H1 (cell line): ENCODE measurements at regions of chr16 and their contacts with region 1.

Region 1: GRCh38 chr16:87778830-87779579 is 13.2 kb upstream of the KLHDC4 start:
- DNase-seq: peak; percentile 95 to 99
- H3K4me3 ChIP-seq: no peak overlapping the region
- H3K27ac ChIP-seq: peak overlapping the region; percentile 89
- H3K4me1 ChIP-seq: peaks cover 0 to 8% (median 6%) of the 10 kb centered on the region in 4 experiments; a peak in 5 of 7 replicates
- H3K27me3 ChIP-seq: no peaks in the 10 kb centered on the region
- CTCF ChIP-seq: peak; percentile 93 to 98 (median 97)
- EP300 ChIP-seq: peak in 1 of 2 experiments; percentile 92; a peak in 1 of 3 replicates
- POLR2A ChIP-seq: peak; percentile 47 to 75
- RAD21 ChIP-seq: peak; percentile 99 to 100

Region 2: DNA sequence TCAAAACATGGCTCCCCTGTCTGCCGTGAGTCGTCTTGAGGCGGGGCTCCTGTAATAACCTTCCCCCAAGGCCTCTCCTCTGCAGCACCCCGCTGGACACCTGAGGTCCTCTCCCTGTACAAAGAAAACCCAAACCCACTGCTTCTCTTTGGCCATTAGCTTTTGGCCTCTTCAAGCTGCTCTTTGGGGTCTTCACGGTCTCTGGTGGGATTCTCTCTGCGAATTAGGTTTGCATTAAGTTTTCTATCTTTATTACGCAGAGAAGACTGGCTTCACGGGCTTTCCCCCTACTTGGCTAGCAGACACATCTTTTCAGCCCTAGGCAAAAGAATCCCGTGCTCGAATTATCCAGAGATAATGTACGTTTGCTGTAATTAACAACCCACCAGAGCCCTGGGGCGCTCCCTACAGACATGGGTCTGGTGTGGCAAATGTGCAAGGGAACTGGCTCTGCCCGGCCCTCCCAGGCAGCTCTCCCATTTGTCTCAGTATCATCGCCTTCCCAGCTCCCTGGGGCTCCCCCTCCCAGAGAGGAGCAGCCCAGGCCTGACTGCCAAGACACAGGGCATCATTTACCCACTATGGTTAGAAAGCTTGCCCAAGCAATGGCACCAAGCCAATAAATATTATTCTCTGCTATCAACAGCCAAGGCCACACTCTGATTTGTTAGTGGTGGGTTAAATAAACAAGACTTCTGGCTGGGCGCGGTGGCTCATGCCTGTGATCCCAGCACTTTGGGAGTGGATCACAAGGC is 11.4 kb after region 1 on chr16:
- CTCF ChIA-PET with region 1: interaction called, 44 read pairs
- POLR2A ChIA-PET with region 1: interaction called, 18 read pairs
- DNase-seq: no peak
- H3K4me3 ChIP-seq: no peak overlapping the region
- H3K27ac ChIP-seq: no peak overlapping the region
- H3K4me1 ChIP-seq: no peaks in the 10 kb centered on the region
- H3K27me3 ChIP-seq: no peaks in the 10 kb centered on the region
- CTCF ChIP-seq: no peak
- EP300 ChIP-seq: no peak
- POLR2A ChIP-seq: no peak
- RAD21 ChIP-seq: no peak

Region 3: DNA sequence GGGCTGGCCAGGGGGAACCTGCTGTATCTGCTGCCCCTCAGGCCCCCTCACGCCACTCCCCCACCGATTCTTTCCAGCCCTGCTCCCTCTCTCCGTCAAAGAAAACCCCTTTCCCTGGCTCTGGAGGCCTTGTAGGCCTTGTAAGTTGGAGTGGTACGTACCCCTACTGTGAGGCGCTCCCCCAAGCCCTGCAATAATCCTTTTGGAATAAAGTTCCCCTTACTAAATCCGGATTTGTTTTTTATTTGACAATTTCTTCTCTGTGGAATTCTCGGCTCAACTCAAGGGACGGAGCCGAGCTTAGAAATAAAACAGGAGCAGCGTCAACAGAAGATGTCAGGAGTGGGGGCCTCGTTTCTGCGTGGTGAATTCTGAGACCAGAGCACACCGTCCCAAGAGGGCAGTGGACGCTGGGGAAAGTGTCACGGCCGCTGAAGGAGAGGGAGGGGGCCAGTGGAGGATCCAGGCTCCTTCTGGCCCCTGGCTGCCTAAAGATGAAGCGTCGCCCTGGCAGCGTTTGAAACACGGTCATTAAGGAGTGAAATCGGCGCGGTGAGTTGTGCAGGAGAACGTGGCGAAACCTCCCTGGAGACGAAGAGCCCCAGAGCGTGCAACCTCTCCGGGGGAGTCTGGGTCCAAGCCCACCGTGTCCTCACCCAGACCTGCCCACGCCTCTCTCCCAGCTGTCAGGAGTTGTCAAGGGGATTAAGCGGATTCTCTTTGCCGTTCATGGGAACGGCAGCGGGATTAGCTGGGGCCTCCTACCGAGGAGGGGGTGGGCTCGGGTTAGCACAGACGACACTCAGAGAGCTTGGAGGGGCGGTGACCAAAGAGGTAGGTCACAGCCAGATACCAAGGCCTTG is 43.3 kb after region 1 on chr16:
- CTCF ChIA-PET with region 1: interaction called, 74 read pairs
- POLR2A ChIA-PET with region 1: interaction called, 117 read pairs
- DNase-seq: no peak
- H3K4me3 ChIP-seq: no peak overlapping the region; a peak in 1 of 8 replicates
- H3K27ac ChIP-seq: no peak overlapping the region
- H3K4me1 ChIP-seq: peaks cover 15 to 53% (median 41%) of the 10 kb centered on the region in 4 experiments
- H3K27me3 ChIP-seq: no peaks in the 10 kb centered on the region
- CTCF ChIP-seq: no peak
- EP300 ChIP-seq: no peak
- POLR2A ChIP-seq: no peak
- RAD21 ChIP-seq: no peak

Region 4: GRCh38 chr16:87844120-87844733 is 65.2 kb after region 1 on chr16:
- CTCF ChIA-PET with region 1: interaction called, 120 read pairs
- POLR2A ChIA-PET with region 1: interaction called, 18 read pairs
- DNase-seq: peak in 1 of 2 experiments; percentile 75
- H3K4me3 ChIP-seq: no peak overlapping the region
- H3K27ac ChIP-seq: no peak overlapping the region
- H3K4me1 ChIP-seq: peaks cover 0 to 6% (median 0%) of the 10 kb centered on the region in 4 experiments; a peak in 1 of 7 replicates
- H3K27me3 ChIP-seq: no peaks in the 10 kb centered on the region
- CTCF ChIP-seq: peak; percentile 44 to 80 (median 70)
- EP300 ChIP-seq: no peak
- POLR2A ChIP-seq: no peak
- RAD21 ChIP-seq: peak; percentile 37 to 53

Region 5: DNA sequence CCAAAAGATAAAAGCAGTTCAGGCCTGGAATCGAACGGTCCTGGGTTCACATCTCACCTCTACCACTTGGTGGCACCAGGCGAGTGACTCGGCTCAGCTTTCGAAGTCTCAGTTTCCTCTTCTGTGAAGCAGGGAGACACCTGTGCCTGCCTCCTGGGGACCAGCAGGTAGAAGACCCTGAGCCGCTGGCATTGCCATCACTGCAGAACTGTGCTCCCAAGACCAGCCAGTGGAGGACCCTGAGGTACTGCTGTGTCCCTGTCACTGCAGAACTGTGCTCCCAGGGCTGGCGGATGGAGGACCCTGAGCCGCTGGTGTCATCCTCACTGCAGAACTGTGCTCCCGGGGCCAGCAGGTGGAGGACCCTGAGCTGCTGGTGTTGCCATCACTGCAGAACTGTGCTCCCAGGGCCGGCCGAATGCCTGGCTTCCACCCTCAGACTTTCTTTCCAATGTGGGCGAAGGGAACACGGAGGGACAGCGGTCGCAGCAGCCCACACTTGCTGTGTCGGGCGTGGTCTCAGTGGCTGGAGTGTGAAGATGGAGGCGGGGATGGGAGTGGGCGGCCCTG is 99.0 kb after region 1 on chr16:
- CTCF ChIA-PET with region 1: interaction called, 99 read pairs
- POLR2A ChIA-PET with region 1: interaction called, 140 read pairs
- DNase-seq: no peak
- H3K4me3 ChIP-seq: no peak overlapping the region
- H3K27ac ChIP-seq: no peak overlapping the region
- H3K4me1 ChIP-seq: peaks cover 3 to 26% (median 13%) of the 10 kb centered on the region in 4 experiments
- H3K27me3 ChIP-seq: no peaks in the 10 kb centered on the region; a peak in 1 of 7 replicates
- CTCF ChIP-seq: peak; percentile 12 to 55 (median 52); a peak in 3 of 4 replicates
- EP300 ChIP-seq: no peak
- POLR2A ChIP-seq: no peak
- RAD21 ChIP-seq: peak; percentile 8 to 40; a peak in 2 of 4 replicates

Region 6: DNA sequence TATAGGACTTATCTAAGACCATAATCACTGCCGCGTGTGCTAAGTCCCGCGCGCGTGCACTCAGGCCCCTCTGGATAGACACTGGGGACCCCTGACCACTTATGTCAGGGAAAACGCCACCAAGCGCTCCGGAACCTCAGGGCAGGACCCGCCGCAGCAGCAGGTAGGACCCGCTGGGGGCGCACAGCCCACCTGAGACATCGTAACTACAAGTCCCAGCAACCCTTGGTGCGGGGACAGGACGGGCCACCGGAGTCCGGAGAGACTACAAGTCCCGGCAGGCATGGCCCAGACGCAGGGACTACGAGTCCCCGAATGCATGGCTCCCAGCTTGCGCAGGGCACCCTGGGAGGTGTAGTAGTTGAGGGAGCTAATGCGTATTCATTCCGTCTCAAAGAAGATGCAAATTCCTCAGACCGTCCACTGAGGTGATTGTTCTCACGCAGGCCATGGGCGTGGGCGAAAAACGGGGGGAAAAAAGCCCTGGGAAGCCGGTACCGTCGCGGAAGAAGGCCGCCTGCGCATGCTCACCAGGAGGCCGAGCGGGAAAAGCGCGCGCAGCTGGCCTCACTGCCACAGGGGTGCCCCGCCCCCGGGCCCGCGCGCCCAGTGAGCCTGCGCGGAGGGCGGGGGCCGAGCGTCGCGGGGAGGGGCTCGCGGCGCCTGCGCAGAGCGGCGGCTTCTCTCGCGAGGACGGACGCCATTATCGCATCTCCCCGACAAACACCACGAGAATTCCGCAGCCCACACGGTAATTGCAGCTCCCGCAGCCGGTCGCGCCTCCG is 172.0 kb after region 1 on chr16 and contains the start of gene BANP:
- CTCF ChIA-PET with region 1: interaction called, 13 read pairs
- POLR2A ChIA-PET with region 1: interaction called, 12 read pairs
- DNase-seq: peak; percentile 93 to 99
- H3K4me3 ChIP-seq: peak within 1 kb of the TSS; percentile 69 to 100 (median 88)
- H3K27ac ChIP-seq: peak within 1 kb of the TSS; percentile 95
- H3K4me1 ChIP-seq: peaks cover 2 to 10% (median 6%) of the 10 kb centered on the region in 4 experiments
- H3K27me3 ChIP-seq: no peaks in the 10 kb centered on the region
- CTCF ChIP-seq: peak; percentile 52 to 68 (median 65)
- EP300 ChIP-seq: no peak
- POLR2A ChIP-seq: peak; percentile 52 to 65
- RAD21 ChIP-seq: 0 out of 4 replicates have a peak, but pooled peaks of 1 of the 2 experiments have one; percentile 19
- total RNA-seq, gene BANP: 39.3 and 39.8 TPM in 2 replicates